GM10248 (cell line): ENCODE measurements at regions of chr14 and their contacts with region 1.

Region 1: GRCh38 chr14:22472935-22473854 is 115.8 kb downstream of the DAD1 start:
- DNase-seq: peak; percentile 71
- CTCF ChIP-seq: peak; percentile 61

Region 2: DNA sequence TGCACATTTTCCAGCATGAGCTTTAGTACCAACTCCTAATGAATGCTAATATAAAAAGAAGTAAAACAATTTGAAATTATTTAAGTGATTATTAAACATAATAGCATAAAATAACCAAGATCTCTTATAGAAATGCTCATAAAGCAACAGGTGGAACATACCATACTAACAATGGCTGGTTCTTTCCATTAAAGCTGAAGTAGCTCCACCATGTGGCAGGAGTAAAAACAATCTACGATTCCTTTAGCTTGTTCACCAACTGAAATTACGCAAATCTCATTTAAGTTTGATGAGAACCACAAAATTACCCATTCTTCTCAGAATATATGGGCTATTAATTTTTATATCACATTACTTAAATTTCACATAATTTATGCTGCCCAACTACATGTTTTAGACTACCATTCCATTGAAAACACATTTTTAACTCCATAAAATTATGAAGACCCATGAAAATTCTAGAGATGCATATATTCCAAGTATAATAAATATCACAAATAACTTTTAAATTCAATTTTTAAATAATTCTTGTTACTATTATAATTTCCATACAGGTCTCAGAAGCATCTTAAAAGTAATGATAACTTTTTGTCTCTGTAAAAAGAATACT is 97.8 kb before region 1 on chr14:
- CTCF ChIA-PET with region 1: interaction called, 140 read pairs
- POLR2A ChIA-PET with region 1: no interaction called
- DNase-seq: peak; percentile 24
- CTCF ChIP-seq: peak; percentile 60

Region 3: GRCh38 chr14:22407033-22407432 is 66.2 kb before region 1 on chr14:
- CTCF ChIA-PET with region 1: interaction called, 38 read pairs
- POLR2A ChIA-PET with region 1: no interaction called
- DNase-seq: no peak
- CTCF ChIP-seq: no peak

Region 4: DNA sequence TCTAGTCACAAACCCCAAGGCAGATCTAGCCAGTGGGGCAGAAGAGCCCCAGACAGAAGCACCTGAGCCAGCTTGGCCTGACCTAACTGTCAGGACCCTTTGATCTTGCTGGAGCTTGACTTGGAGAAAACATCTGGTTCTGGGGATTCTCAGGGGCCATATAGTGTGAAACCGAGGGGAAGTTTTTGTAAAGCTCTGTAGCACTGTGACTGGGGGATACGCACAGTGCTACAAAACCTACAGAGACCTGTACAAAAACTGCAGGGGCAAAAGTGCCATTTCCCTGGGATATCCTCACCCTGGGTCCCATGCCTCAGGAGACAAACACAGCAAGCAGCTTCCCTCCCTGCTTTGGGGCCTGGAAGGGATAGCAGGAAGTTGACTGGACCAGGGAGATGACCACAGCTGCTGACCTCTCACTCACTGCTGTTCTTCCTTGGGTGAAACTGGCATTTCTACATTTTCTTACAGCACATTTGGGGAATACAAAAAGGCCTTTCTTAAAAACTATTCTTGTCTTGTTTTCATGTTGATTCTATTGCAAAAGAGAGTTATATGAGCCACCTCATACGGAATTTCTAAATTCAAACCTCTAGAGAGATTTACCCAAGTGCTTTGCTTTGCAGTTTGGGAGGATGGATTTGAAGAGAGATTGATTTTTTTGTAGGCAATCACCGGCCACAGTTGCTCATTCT is 24.1 kb before region 1 on chr14:
- CTCF ChIA-PET with region 1: interaction called, 48 read pairs
- POLR2A ChIA-PET with region 1: interaction called, 4 read pairs
- DNase-seq: peak; percentile 38
- CTCF ChIP-seq: no peak

Region 5: GRCh38 chr14:22491683-22492621 is 18.8 kb after region 1 on chr14:
- CTCF ChIA-PET with region 1: interaction called, 86 read pairs
- POLR2A ChIA-PET with region 1: no interaction called
- DNase-seq: peak; percentile 39
- CTCF ChIP-seq: no peak

Region 6: GRCh38 chr14:22531451-22532344 is 58.5 kb after region 1 on chr14:
- CTCF ChIA-PET with region 1: interaction called, 18 read pairs
- POLR2A ChIA-PET with region 1: no interaction called
- DNase-seq: peak; percentile 60
- CTCF ChIP-seq: no peak

Region 7: DNA sequence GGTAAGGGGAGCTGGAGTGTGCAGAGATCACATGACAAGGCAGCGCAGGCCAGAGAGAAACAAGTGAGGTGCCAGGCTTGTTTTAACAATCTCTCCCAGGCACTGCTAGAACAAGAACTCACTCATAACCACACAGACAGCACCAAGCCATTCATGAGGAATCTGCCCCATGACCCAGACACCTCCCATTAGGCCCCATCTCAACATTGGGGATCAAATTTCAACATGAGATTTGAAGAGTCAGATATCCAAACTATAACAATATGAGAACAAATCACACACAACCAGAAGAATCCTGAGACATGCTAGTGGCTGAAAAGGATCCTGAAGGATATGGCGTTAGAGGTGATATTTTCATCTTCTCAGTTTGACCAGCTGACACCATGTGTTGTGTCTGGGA is 149.1 kb after region 1 on chr14:
- CTCF ChIA-PET with region 1: no interaction called
- POLR2A ChIA-PET with region 1: no interaction called
- DNase-seq: no peak
- CTCF ChIP-seq: no peak

Region 8: GRCh38 chr14:22737052-22737451 is 263.9 kb after region 1 on chr14:
- CTCF ChIA-PET with region 1: no interaction called
- POLR2A ChIA-PET with region 1: no interaction called
- DNase-seq: peak; percentile 74
- CTCF ChIP-seq: no peak